ENCODE measurements at regions of chrX and their contacts with region 1.

Region 1: GRCh38 chrX:1537035-1537715 is at the start of gene P2RY8:
- DNase-seq: peak; percentile 69 to 90
- ATAC-seq: peak; percentile 80 to 92 (median 85)
- H3K4me3 ChIP-seq: peak within 1 kb of the TSS; percentile 96
- H3K4me3 Mint-ChIP-seq: peak within 1 kb of the TSS; percentile 93
- H3K27ac ChIP-seq: peak within 1 kb of the TSS; percentile 98
- H3K27ac Mint-ChIP-seq: peak within 1 kb of the TSS; percentile 95 to 97
- H3K4me1 ChIP-seq: peaks cover 25% of the 10 kb centered on the region
- H3K4me1 Mint-ChIP-seq: peaks cover 21 to 26% of the 10 kb centered on the region in 2 donors
- H3K27me3 ChIP-seq: no peaks in the 10 kb centered on the region
- H3K27me3 Mint-ChIP-seq: no peaks in the 10 kb centered on the region
- CTCF ChIP-seq: no peak
- total RNA-seq, gene P2RY8: 73.7 to 114 (median 107) TPM

Region 2: DNA sequence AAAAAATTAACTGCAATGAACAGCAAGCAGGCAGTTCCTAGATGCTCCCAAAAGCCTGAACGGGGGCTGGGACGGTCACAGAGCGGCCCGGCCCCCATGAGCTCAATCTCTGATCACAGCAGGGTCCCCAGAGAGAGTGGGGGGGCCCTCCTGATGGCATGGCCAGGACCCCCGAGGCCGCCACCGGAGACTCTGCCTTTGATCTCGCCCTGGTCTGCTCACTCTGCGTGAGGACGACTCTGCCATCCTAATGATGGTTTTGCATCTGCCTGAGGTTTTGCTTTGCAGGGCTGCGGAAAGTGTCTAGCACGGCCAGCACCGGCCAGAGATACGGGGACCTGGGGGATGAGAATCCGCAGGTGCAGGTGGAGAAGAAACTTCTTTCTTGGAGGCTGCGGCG is 802.8 kb before region 1 on chrX:
- intact Hi-C with region 1: no loop called
- DNase-seq: no peak
- ATAC-seq: no peak
- H3K4me3 ChIP-seq: no peak overlapping the region
- H3K4me3 Mint-ChIP-seq: no peak overlapping the region
- H3K27ac ChIP-seq: no peak overlapping the region
- H3K27ac Mint-ChIP-seq: no peak overlapping the region
- H3K4me1 ChIP-seq: no peaks in the 10 kb centered on the region
- H3K4me1 Mint-ChIP-seq: no peaks in the 10 kb centered on the region
- H3K27me3 ChIP-seq: no peaks in the 10 kb centered on the region
- H3K27me3 Mint-ChIP-seq: no peaks in the 10 kb centered on the region
- CTCF ChIP-seq: no peak

Region 3: GRCh38 chrX:1391707-1392375 is 145.3 kb before region 1 on chrX and contains the start of gene SLC25A6:
- intact Hi-C with region 1: loop called (anchors 1 kb)
- DNase-seq: peak; percentile 99 to 100
- ATAC-seq: peak; percentile 93 to 98 (median 93)
- H3K4me3 ChIP-seq: peak within 1 kb of the TSS; percentile 99
- H3K4me3 Mint-ChIP-seq: peak within 1 kb of the TSS; percentile 92
- H3K27ac ChIP-seq: peak within 1 kb of the TSS; percentile 95
- H3K27ac Mint-ChIP-seq: peak within 1 kb of the TSS; percentile 85 to 94
- H3K4me1 ChIP-seq: peaks cover 24% of the 10 kb centered on the region
- H3K4me1 Mint-ChIP-seq: peaks cover 37 to 61% of the 10 kb centered on the region in 2 donors
- H3K27me3 ChIP-seq: no peaks in the 10 kb centered on the region
- H3K27me3 Mint-ChIP-seq: no peaks in the 10 kb centered on the region
- CTCF ChIP-seq: no peak
- total RNA-seq, gene SLC25A6: 157 to 197 (median 178) TPM

Region 4: DNA sequence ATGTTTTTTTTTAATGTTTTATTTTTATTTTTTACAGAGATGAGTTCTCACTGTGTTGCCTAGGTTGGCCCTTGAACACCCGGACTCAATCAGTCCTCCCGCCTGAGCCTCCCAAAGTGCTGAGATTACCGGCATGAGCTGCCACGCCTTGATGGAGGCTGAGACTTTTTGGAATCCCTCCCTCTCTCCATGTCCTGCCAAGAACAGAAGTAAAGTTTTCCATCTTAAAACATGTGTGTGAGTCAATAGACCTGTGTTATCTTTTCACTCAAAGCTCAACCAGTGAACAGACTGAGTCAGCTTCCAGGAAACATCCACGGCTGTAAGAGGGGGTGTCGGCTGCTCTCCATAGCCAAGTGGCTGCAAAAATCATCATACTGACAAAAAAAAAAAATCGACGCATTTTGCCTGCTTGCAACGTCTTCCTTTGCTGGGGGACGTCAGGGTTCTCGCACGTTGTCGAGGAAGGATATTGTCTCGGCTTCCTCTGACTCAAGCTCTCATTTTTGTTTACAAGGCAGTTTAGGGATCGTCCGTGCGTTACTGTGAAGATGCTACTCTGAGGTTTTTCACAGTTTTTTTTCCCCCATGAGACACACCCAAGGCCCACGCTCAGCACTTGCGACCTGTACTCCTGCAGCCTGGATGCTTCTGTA is 74.5 kb before region 1 on chrX:
- intact Hi-C with region 1: loop called (anchors 2 kb)
- DNase-seq: peak; percentile 58 to 95
- ATAC-seq: peak; percentile 69 to 86 (median 82)
- H3K4me3 ChIP-seq: no peak overlapping the region
- H3K4me3 Mint-ChIP-seq: peak overlapping the region; percentile 92
- H3K27ac ChIP-seq: peak overlapping the region; percentile 83
- H3K27ac Mint-ChIP-seq: peak overlapping the region; percentile 90 to 91
- H3K4me1 ChIP-seq: peaks cover 65% of the 10 kb centered on the region
- H3K4me1 Mint-ChIP-seq: peaks cover 54 to 56% of the 10 kb centered on the region in 2 donors
- H3K27me3 ChIP-seq: no peaks in the 10 kb centered on the region
- H3K27me3 Mint-ChIP-seq: no peaks in the 10 kb centered on the region
- CTCF ChIP-seq: no peak

Region 5: DNA sequence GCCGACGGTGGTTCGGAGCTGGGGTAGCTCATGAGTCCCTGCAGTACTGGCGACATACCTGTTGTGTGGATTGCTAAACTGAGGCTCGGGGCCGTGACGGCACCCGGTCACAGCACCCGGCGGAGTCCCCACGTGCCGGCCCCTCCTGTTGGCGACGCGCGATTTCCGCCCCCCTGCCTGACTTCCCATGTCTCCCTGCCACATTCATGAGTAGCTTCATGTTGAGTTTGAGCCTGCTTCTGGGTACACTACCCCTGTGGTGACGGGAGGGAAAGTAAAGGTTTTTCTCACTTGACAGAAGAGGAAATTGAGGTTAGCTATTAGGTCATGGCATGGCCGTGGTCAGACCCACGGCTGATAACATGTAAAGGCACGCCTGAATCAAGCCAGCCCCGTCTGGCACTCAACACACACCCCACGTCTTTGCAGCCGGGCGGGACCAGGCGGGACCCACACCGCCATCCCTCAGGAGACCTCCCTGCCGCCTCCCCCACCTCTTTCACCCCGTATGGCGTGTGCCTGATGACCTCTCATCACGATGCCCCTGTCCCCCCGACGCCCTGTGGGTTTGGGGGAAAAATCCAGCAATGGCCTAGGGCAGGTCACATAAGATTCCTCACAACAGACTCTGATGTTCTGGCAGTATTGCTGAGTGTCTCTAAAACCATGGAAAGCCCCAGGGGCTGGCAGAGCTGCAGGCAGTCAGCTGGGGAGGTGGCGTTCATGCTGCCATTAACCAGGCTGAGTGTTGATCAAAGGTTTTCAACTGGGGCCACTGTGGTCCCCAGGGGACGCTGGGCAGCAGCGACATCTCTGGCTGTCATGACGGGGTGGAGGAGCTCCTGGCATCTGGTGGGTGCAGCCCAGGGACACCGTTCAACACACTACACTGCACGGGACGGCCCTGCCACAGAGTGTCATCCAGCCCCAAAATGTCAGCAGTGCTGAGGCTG is 29.4 kb before region 1 on chrX:
- intact Hi-C with region 1: loop called (anchors 2 kb)
- DNase-seq: peak; percentile 71 to 86
- ATAC-seq: peak; percentile 81 to 90 (median 88)
- H3K4me3 ChIP-seq: no peak overlapping the region
- H3K4me3 Mint-ChIP-seq: peak overlapping the region; percentile 73
- H3K27ac ChIP-seq: peak overlapping the region; percentile 43
- H3K27ac Mint-ChIP-seq: no peak overlapping the region
- H3K4me1 ChIP-seq: peaks cover 53% of the 10 kb centered on the region
- H3K4me1 Mint-ChIP-seq: peaks cover 12 to 26% of the 10 kb centered on the region in 2 donors
- H3K27me3 ChIP-seq: no peaks in the 10 kb centered on the region
- H3K27me3 Mint-ChIP-seq: no peaks in the 10 kb centered on the region
- CTCF ChIP-seq: no peak

Region 6: DNA sequence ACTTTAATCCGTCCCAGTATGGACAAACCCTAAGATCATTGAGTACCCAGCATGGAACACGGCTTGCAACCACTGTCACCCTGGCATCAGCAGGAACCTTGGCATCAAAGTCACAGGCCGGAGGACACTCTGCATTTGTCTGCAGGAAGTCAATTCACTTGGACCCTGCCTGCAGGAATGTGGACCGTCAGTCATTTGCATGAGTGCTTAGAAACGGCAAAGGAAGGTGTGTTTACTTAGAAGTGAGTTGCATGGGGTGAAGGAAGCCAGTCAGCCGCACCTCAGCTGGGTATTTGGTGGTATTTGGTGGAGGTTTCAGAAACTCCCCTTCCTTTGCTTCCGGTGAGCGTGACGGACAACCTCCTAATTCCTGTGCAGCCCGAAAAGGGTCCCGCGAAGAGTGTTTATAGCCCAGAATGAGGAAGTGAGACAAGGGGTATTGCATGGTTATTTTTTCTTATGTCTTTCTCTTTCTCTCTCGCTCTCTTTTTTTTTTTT is 15.7 kb before region 1 on chrX:
- intact Hi-C with region 1: loop called (anchors 2 kb)
- DNase-seq: peak; percentile 32 to 90
- ATAC-seq: peak; percentile 89 to 92 (median 91)
- H3K4me3 ChIP-seq: no peak overlapping the region
- H3K4me3 Mint-ChIP-seq: peak overlapping the region; percentile 53
- H3K27ac ChIP-seq: peak overlapping the region; percentile 82
- H3K27ac Mint-ChIP-seq: peak overlapping the region; percentile 78 to 91
- H3K4me1 ChIP-seq: peaks cover 38% of the 10 kb centered on the region
- H3K4me1 Mint-ChIP-seq: peaks cover 44 to 52% of the 10 kb centered on the region in 2 donors
- H3K27me3 ChIP-seq: no peaks in the 10 kb centered on the region
- H3K27me3 Mint-ChIP-seq: no peaks in the 10 kb centered on the region
- CTCF ChIP-seq: no peak

Region 7: DNA sequence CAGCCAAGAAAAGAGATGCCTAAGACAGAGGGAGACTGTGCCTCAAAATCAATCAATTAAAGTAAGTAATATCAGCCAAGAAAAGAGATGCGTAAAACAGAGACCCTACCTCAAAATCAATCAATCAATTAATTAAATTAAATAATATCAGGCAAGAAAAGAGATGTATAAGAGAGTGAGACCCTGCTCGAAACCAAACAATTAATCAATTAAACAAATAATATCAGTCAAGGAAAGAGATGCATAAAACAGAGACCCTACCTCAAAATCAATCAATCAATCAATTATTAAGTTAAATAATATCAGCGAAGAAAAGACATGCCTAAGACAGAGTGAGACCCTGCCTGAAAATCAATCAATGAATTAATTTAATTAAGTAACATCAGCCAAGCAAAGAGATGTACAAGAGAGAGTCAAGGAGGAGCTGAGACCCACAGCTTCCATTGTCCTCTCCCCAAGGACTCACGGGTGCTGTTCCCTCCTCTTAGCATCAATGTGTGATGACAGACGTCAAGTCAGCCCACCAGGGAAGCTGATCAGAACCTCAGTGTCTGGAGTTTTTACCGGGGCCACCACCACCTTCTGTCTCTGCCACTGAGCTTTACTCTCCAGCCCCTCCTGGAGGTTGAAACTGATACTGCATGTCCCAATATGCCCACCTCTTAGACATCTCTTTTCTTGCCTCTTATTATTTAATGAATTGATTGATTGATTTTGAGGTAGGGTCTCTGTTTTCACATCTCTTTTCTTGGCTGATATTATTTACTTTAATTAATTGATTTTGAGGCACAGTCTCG is 43.8 kb after region 1 on chrX:
- intact Hi-C with region 1: loop called (anchors 1 kb)
- DNase-seq: peak; percentile 70 to 87
- ATAC-seq: peak; percentile 95 to 99 (median 99)
- H3K4me3 ChIP-seq: no peak overlapping the region
- H3K4me3 Mint-ChIP-seq: no peak overlapping the region
- H3K27ac ChIP-seq: no peak overlapping the region
- H3K27ac Mint-ChIP-seq: peak overlapping the region in 1 of 2 donors; percentile 50
- H3K4me1 ChIP-seq: peaks cover 8% of the 10 kb centered on the region
- H3K4me1 Mint-ChIP-seq: peaks cover 8 to 11% of the 10 kb centered on the region in 2 donors
- H3K27me3 ChIP-seq: no peaks in the 10 kb centered on the region
- H3K27me3 Mint-ChIP-seq: no peaks in the 10 kb centered on the region
- CTCF ChIP-seq: peak; percentile 92

Measured in natural killer cell (primary cell).